Activated CD4-positive, alpha-beta T cell treated with anti-CD3 and anti-CD28 coated beads, Interleukin-2, amount 10 ng/mL, durations not matched to agents 24 days and 14 days (primary cell): ENCODE measurements at regions of chr3 and their contacts with region 1.

Region 1: GRCh38 chr3:27484015-27484844 is at the start of gene SLC4A7:
- DNase-seq: peak; percentile 99
- H3K4me3 Mint-ChIP-seq: peak within 1 kb of the TSS; percentile 100
- H3K27ac Mint-ChIP-seq: peak within 1 kb of the TSS; percentile 99
- H3K4me1 Mint-ChIP-seq: peaks cover 35% of the 10 kb centered on the region
- H3K27me3 Mint-ChIP-seq: no peaks in the 10 kb centered on the region
- total RNA-seq, gene SLC4A7: 65.8 and 69.0 TPM in 2 replicates

Region 2: GRCh38 chr3:25789596-25790556 is 1694.4 kb before region 1 on chr3 and contains the start of gene OXSM:
- intact Hi-C with region 1: loop called (anchors 5 kb)
- DNase-seq: peak; percentile 97
- H3K4me3 Mint-ChIP-seq: peak within 1 kb of the TSS; percentile 90
- H3K27ac Mint-ChIP-seq: peak within 1 kb of the TSS; percentile 99
- H3K4me1 Mint-ChIP-seq: peaks cover 54% of the 10 kb centered on the region
- H3K27me3 Mint-ChIP-seq: peaks cover 2% of the 10 kb centered on the region
- total RNA-seq, gene OXSM: 13.3 and 16.3 TPM in 2 replicates

Region 3: DNA sequence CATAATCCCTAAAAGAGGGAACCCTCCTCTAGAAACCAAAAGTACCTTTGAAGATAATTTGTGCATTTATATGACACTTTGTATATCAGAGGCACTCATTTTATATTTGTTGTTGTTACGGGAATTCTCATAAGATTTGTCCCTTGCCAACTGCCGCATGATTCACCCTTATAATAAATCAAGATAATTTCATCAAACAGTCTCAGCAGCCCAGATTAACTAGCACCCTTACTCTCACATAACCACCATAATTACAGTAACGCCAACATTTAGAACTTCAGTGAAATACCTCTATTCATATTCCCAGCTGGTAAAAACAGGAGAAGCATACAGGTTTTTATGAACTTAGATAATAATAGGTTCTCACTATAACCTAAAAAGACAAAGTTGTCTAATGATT is 589.8 kb before region 1 on chr3:
- intact Hi-C with region 1: no loop called
- DNase-seq: no peak
- H3K4me3 Mint-ChIP-seq: no peak overlapping the region
- H3K27ac Mint-ChIP-seq: no peak overlapping the region
- H3K4me1 Mint-ChIP-seq: no peaks in the 10 kb centered on the region
- H3K27me3 Mint-ChIP-seq: no peaks in the 10 kb centered on the region

Region 4: GRCh38 chr3:27010834-27011233 is 473.4 kb before region 1 on chr3:
- intact Hi-C with region 1: no loop called
- DNase-seq: no peak
- H3K4me3 Mint-ChIP-seq: no peak overlapping the region
- H3K27ac Mint-ChIP-seq: no peak overlapping the region
- H3K4me1 Mint-ChIP-seq: no peaks in the 10 kb centered on the region
- H3K27me3 Mint-ChIP-seq: no peaks in the 10 kb centered on the region

Region 5: GRCh38 chr3:27454914-27455313 is 29.3 kb before region 1 on chr3:
- intact Hi-C with region 1: loop called (anchors 2 kb)
- DNase-seq: no peak
- H3K4me3 Mint-ChIP-seq: peak overlapping the region; percentile 39
- H3K27ac Mint-ChIP-seq: peak overlapping the region; percentile 83
- H3K4me1 Mint-ChIP-seq: peaks cover 26% of the 10 kb centered on the region
- H3K27me3 Mint-ChIP-seq: no peaks in the 10 kb centered on the region

Region 6: GRCh38 chr3:27590437-27591298 is 106.4 kb after region 1 on chr3:
- intact Hi-C with region 1: loop called (anchors 2 kb)
- DNase-seq: peak; percentile 65
- H3K4me3 Mint-ChIP-seq: peak overlapping the region; percentile 55
- H3K27ac Mint-ChIP-seq: peak overlapping the region; percentile 85
- H3K4me1 Mint-ChIP-seq: peaks cover 28% of the 10 kb centered on the region
- H3K27me3 Mint-ChIP-seq: no peaks in the 10 kb centered on the region

Region 7: GRCh38 chr3:27666708-27667107 is 182.5 kb after region 1 on chr3:
- intact Hi-C with region 1: loop called (anchors 5 kb)
- DNase-seq: peak; percentile 76
- H3K4me3 Mint-ChIP-seq: peak overlapping the region; percentile 58
- H3K27ac Mint-ChIP-seq: peak overlapping the region; percentile 82
- H3K4me1 Mint-ChIP-seq: peaks cover 14% of the 10 kb centered on the region
- H3K27me3 Mint-ChIP-seq: no peaks in the 10 kb centered on the region

Region 8: GRCh38 chr3:28241221-28242160 is 757.3 kb after region 1 on chr3 and contains the start of gene CMC1:
- intact Hi-C with region 1: loop called (anchors 5 kb)
- DNase-seq: peak; percentile 97
- H3K4me3 Mint-ChIP-seq: peak within 1 kb of the TSS; percentile 94
- H3K27ac Mint-ChIP-seq: peak within 1 kb of the TSS; percentile 93
- H3K4me1 Mint-ChIP-seq: peaks cover 31% of the 10 kb centered on the region
- H3K27me3 Mint-ChIP-seq: no peaks in the 10 kb centered on the region
- total RNA-seq, gene CMC1: 21.3 and 23.2 TPM in 2 replicates